Dendritic cell treated with granulocyte-macrophage colony-stimulating factor and Interleukin-4, amounts not matched to agents 40 ng/mL and 50 ng/mL, for 4 days (primary cell): ENCODE measurements at regions of chr21 and their contacts with region 1.

Region 1: DNA sequence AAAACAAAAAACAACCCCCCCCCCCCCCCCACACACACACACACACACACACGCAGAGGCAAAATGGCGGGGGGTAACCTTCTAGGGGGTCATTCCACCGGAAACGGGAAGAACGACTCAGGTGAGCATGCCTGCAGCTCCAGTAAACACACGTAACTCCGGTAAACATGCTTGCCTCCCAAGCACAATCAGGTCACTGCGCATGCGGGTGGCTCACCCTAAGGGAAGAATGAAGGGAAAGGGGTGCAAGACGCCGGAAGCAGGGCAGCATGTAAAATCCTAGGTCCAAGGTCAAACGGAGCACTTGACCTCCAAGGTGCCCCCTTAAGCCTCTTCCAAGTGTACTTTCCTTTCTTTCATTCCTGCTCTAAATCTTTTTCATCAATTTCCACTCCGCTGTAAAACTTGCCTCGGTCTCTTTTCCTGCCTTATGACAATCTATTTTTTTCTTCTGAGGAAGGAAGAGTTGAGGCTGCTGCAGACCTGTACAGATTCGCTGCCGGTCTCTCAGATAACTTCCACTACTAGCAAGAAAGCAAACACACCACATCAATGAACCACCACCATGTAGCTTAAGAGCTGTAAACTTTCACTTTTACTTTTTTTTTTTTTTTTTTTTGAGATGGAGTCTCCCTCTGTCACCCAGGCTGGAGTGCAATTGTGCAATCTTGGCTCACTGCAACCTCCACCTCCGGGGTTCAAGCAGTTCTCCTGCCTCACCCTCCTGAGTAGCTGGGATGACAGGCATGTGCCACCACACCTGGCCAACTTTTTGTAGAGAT is 21.0 kb upstream of the CBR3 start:
- H3K4me3 Mint-ChIP-seq: no peak overlapping the region
- H3K27ac Mint-ChIP-seq: peak overlapping the region; percentile 29
- H3K4me1 Mint-ChIP-seq: peaks cover 19% of the 10 kb centered on the region
- H3K27me3 Mint-ChIP-seq: peaks cover 2% of the 10 kb centered on the region

Region 2: GRCh38 chr21:36044056-36044455 is 69.8 kb before region 1 on chr21:
- intact Hi-C with region 1: loop called (anchors 5 kb)
- H3K4me3 Mint-ChIP-seq: no peak overlapping the region
- H3K27ac Mint-ChIP-seq: no peak overlapping the region
- H3K4me1 Mint-ChIP-seq: no peaks in the 10 kb centered on the region
- H3K27me3 Mint-ChIP-seq: no peaks in the 10 kb centered on the region

Region 3: GRCh38 chr21:36060159-36060921 is 53.5 kb before region 1 on chr21 and contains the start of gene SETD4:
- intact Hi-C with region 1: loop called (anchors 5 kb)
- H3K4me3 Mint-ChIP-seq: peak within 1 kb of the TSS; percentile 86
- H3K27ac Mint-ChIP-seq: peak within 1 kb of the TSS; percentile 95
- H3K4me1 Mint-ChIP-seq: peaks cover under 1% of the 10 kb centered on the region
- H3K27me3 Mint-ChIP-seq: no peaks in the 10 kb centered on the region

Region 4: DNA sequence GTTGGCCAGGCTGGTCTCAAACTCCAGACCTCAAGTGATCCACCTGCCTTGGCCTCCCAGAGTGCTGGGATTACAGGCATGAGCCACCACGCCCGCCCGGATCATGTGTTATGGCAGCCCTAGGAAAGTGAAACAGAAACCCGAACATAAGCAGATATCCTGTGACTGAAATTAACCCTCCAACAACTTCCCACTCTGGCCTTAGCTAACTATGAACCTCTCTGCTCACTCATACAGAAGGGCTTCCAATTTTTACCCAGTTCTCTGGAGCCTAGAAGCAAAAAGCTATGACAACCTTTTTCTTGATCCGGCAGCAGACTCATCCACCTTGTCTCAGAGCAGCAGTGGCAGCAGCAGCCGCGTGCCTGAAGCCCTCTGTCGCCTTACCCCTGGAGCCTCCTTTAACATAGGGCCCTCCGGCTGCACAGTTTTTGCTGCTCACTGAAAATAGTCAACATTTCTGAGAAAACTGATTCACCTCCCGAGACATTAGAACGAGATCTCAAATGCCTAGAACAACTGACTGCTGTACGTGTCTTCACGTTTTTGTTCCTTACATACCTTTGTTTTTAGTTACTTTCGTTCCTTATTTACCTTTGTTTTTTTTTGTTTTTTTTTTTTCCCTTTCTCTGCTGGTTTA is 34.7 kb before region 1 on chr21:
- intact Hi-C with region 1: loop called (anchors 5 kb)
- H3K4me3 Mint-ChIP-seq: peak overlapping the region; percentile 61
- H3K27ac Mint-ChIP-seq: peak overlapping the region; percentile 90
- H3K4me1 Mint-ChIP-seq: peaks cover 44% of the 10 kb centered on the region
- H3K27me3 Mint-ChIP-seq: no peaks in the 10 kb centered on the region